CD8-positive, alpha-beta T cell (primary cell): ENCODE measurements at regions of chr9 and their contacts with region 1.

Region 1: DNA sequence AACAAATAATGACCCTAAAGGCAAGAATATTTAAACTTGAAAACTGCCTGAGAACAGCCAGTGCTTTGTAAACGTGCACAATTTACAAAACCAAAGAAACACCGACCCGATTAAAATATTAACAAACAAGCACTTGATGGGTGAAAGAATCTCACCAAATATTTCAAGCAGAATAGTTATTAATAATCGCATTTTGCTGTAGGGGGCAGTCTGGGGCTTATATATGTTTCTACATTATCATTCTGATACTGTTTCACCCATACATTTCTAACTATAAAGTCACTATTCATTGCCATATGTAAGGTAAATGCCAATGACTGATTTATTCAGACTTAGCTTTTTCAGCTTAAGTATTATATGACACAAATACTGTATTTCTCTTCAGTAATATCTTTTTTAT is 37.7 kb downstream of the UBAP2 start:
- DNase-seq: peak in 3 of 9 experiments; percentile 17 to 51 (median 34)
- ATAC-seq: peak; percentile 42
- H3K4me3 ChIP-seq: no peak overlapping the region
- H3K4me3 Mint-ChIP-seq: no peak overlapping the region
- H3K27ac ChIP-seq: no peak overlapping the region
- H3K27ac Mint-ChIP-seq: no peak overlapping the region
- H3K4me1 ChIP-seq: no peaks in the 10 kb centered on the region
- H3K4me1 Mint-ChIP-seq: no peaks in the 10 kb centered on the region
- H3K27me3 ChIP-seq: no peaks in the 10 kb centered on the region
- H3K27me3 Mint-ChIP-seq: no peaks in the 10 kb centered on the region
- CTCF ChIP-seq: peak; percentile 64

Region 2: GRCh38 chr9:33306037-33306436 is 704.9 kb before region 1 on chr9:
- CTCF ChIA-PET with region 1: no interaction called
- POLR2A ChIA-PET with region 1: no interaction called
- intact Hi-C with region 1: no loop called
- DNase-seq: no peak
- ATAC-seq: peak; percentile 36
- H3K4me3 ChIP-seq: no peak overlapping the region
- H3K4me3 Mint-ChIP-seq: no peak overlapping the region
- H3K27ac ChIP-seq: no peak overlapping the region
- H3K27ac Mint-ChIP-seq: no peak overlapping the region
- H3K4me1 ChIP-seq: no peaks in the 10 kb centered on the region
- H3K4me1 Mint-ChIP-seq: peaks cover 10% of the 10 kb centered on the region
- H3K27me3 ChIP-seq: no peaks in the 10 kb centered on the region
- H3K27me3 Mint-ChIP-seq: no peaks in the 10 kb centered on the region
- CTCF ChIP-seq: no peak

Region 3: GRCh38 chr9:34048923-34049697 is 38.1 kb after region 1 on chr9:
- CTCF ChIA-PET with region 1: interaction called, 3 read pairs
- POLR2A ChIA-PET with region 1: no interaction called
- intact Hi-C with region 1: loop called in 1 of 2 experiments (anchors 5 kb)
- DNase-seq: peak; percentile 92 to 99 (median 97)
- ATAC-seq: peak; percentile 81
- H3K4me3 ChIP-seq: peak overlapping the region; percentile 76 to 79
- H3K4me3 Mint-ChIP-seq: peak overlapping the region; percentile 97
- H3K27ac ChIP-seq: peak overlapping the region; percentile 87 to 95
- H3K27ac Mint-ChIP-seq: peak overlapping the region; percentile 100
- H3K4me1 ChIP-seq: peaks cover 23% of the 10 kb centered on the region
- H3K4me1 Mint-ChIP-seq: peaks cover 29% of the 10 kb centered on the region
- H3K27me3 ChIP-seq: no peaks in the 10 kb centered on the region
- H3K27me3 Mint-ChIP-seq: no peaks in the 10 kb centered on the region
- CTCF ChIP-seq: no peak

Region 4: GRCh38 chr9:34072868-34073590 is 62.0 kb after region 1 on chr9:
- CTCF ChIA-PET with region 1: interaction called, 5 read pairs
- POLR2A ChIA-PET with region 1: no interaction called
- intact Hi-C with region 1: loop called in 1 of 2 experiments (anchors 1 kb)
- DNase-seq: no peak
- ATAC-seq: no peak
- H3K4me3 ChIP-seq: no peak overlapping the region
- H3K4me3 Mint-ChIP-seq: no peak overlapping the region
- H3K27ac ChIP-seq: no peak overlapping the region
- H3K27ac Mint-ChIP-seq: no peak overlapping the region
- H3K4me1 ChIP-seq: no peaks in the 10 kb centered on the region
- H3K4me1 Mint-ChIP-seq: no peaks in the 10 kb centered on the region
- H3K27me3 ChIP-seq: no peaks in the 10 kb centered on the region
- H3K27me3 Mint-ChIP-seq: no peaks in the 10 kb centered on the region
- CTCF ChIP-seq: no peak

Region 5: GRCh38 chr9:34158362-34158869 is 147.4 kb after region 1 on chr9:
- CTCF ChIA-PET with region 1: no interaction called
- POLR2A ChIA-PET with region 1: no interaction called
- intact Hi-C with region 1: loop called (anchors 1 to 5 kb)
- DNase-seq: no peak
- ATAC-seq: no peak
- H3K4me3 ChIP-seq: no peak overlapping the region
- H3K4me3 Mint-ChIP-seq: no peak overlapping the region
- H3K27ac ChIP-seq: no peak overlapping the region
- H3K27ac Mint-ChIP-seq: no peak overlapping the region
- H3K4me1 ChIP-seq: no peaks in the 10 kb centered on the region
- H3K4me1 Mint-ChIP-seq: no peaks in the 10 kb centered on the region
- H3K27me3 ChIP-seq: no peaks in the 10 kb centered on the region
- H3K27me3 Mint-ChIP-seq: no peaks in the 10 kb centered on the region
- CTCF ChIP-seq: no peak

Region 6: GRCh38 chr9:34500623-34501267 is 489.8 kb after region 1 on chr9:
- CTCF ChIA-PET with region 1: no interaction called
- POLR2A ChIA-PET with region 1: no interaction called
- intact Hi-C with region 1: loop called in 1 of 2 experiments (anchors 5 kb)
- DNase-seq: peak; percentile 52 to 84 (median 73)
- ATAC-seq: peak; percentile 97
- H3K4me3 ChIP-seq: no peak overlapping the region
- H3K4me3 Mint-ChIP-seq: no peak overlapping the region
- H3K27ac ChIP-seq: no peak overlapping the region
- H3K27ac Mint-ChIP-seq: no peak overlapping the region
- H3K4me1 ChIP-seq: no peaks in the 10 kb centered on the region
- H3K4me1 Mint-ChIP-seq: no peaks in the 10 kb centered on the region
- H3K27me3 ChIP-seq: no peaks in the 10 kb centered on the region
- H3K27me3 Mint-ChIP-seq: peaks cover 10% of the 10 kb centered on the region
- CTCF ChIP-seq: peak; percentile 91